ENCODE measurements at regions of chr12 and their contacts with region 1.

Region 1: DNA sequence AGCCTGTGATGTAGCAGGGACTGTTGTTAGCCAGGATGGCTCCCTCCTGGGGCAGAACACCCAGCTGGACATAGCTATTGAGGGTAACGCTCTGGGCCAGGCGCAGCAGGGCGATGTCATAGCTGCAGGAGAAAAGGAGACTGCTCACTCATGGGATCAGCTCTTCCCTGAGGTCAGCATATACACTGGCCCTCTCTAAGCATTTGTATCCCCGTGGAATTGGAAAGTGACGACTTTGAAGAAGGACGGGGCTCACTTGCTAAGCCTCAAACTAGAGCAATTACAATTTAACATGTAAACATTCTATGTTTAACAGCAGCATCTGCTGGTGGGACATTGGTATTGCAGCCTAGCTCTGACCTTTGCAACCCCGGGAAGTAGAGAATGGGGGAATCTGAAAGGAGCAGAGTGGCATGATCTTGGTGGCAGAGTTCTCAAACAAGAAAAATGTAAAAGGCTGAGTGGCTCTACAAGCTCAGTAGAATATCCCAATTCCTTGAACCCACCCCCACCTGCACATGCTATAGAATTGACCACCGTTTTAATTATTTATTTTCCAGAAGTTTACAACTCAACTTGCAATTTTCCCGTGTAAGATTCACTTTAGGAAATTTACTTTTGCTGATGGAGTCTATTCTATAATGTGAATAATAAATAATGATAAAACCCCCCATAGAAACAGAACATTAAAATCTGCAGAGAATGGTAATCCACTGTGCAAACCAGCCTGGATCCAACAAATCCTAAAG is 5.0 kb downstream of the CELA1 start:
- DNase-seq: peak; percentile 75
- ATAC-seq: peak; percentile 76
- H3K4me3 Mint-ChIP-seq: peak overlapping the region; percentile 51
- H3K27ac Mint-ChIP-seq: no peak overlapping the region
- H3K4me1 Mint-ChIP-seq: peaks cover 6% of the 10 kb centered on the region
- H3K27me3 Mint-ChIP-seq: no peaks in the 10 kb centered on the region
- CTCF ChIP-seq: peak; percentile 91

Region 2: DNA sequence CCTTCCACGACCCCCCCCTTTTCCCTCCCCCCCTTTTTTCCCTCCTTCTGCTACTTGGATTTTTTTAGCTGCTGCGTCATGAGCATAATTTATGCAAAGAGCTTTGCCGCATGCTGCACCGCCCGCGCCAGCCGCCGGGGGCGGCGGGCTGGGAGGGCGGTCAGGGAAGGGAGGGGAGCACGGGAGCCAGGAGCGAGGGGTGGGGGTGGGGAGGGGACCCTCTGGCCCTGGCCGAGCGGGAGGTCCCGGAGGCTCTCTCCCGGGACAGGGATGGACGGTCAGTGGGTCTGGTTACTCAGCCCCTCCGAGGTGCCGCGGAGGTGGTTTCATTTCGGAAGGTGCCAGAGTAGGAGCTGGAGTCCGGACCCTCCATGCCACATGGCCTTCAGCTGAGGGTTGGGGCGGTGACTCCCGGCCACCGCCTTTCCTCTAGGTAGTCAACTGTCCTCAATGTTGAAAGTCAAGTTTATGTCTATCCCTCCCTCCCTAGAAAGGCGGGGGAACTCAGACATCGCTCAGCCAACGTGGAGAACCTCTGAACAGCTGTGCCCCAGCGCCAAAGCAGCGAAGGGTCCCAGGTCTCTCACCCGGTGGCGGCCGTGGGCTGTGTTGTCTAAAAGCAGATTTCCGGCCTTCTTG is 123.3 kb before region 1 on chr12 and contains the start of gene POU6F1:
- CTCF ChIA-PET with region 1: interaction called, 20 read pairs
- POLR2A ChIA-PET with region 1: no interaction called
- DNase-seq: peak; percentile 74
- ATAC-seq: peak; percentile 75
- H3K4me3 Mint-ChIP-seq: peak within 1 kb of the TSS; percentile 70
- H3K27ac Mint-ChIP-seq: peak within 1 kb of the TSS; percentile 54
- H3K4me1 Mint-ChIP-seq: peaks cover 18% of the 10 kb centered on the region
- H3K27me3 Mint-ChIP-seq: no peaks in the 10 kb centered on the region
- CTCF ChIP-seq: peak; percentile 34; the same call in 1 of the 2 replicates
- total RNA-seq, gene POU6F1: 10.2 to 14.5 TPM (median 11.2 TPM) in 3 replicates

Region 3: DNA sequence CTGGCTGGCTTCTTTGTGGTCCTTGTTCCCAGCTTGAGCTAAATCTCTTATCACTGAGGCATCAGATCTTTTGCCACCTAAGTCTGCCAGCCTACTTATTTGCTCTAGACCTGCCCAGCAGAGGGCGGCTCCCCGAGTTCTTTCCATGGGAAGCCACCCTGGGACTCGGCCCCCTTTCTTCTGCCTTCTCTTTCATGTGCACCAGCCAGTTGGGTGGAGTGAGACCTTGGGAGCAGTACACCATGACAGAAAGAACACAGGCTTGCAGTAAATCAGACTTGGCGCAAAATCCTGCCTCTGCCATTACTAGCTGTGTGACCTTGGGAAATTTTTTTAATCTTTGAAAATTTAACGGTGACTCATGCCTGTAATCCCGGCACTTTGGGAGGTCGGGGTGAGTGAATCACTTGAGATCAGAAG is 78.7 kb before region 1 on chr12:
- CTCF ChIA-PET with region 1: interaction called, 17 read pairs
- POLR2A ChIA-PET with region 1: no interaction called
- DNase-seq: peak; percentile 63
- ATAC-seq: peak; percentile 96
- H3K4me3 Mint-ChIP-seq: no peak overlapping the region
- H3K27ac Mint-ChIP-seq: no peak overlapping the region; the same call in 1 of the 2 replicates
- H3K4me1 Mint-ChIP-seq: peaks cover 11% of the 10 kb centered on the region
- H3K27me3 Mint-ChIP-seq: no peaks in the 10 kb centered on the region
- CTCF ChIP-seq: no peak

Region 4: DNA sequence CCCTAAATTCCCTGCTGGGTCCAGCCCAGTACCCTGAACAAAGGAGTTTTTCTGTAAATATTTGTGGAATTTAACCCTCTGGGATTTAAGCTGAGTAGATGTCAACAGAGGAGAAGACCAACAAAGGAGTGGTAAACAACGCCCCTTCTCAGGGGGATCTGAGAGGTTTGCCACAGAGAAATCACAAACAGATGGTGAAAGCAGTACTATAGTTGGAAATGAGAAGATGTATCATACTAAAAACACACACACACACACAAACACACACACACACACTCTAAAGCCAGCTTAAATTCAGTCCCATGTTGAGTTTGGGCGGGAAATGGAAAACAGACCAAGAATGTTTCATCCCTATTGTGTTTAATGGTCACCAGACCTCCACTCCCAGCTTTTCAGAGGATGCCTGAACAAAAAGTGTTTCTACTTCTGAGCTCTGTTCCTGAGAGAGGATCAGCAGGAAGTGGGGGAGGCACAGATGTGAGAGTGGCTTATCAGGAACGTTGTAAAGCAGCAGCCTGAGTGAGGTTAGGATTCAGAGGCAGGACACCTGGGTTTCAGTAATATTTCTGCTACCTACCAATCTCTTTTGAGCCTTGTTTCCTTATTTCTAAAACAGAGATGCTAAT is 20.6 kb before region 1 on chr12:
- CTCF ChIA-PET with region 1: interaction called, 14 read pairs
- POLR2A ChIA-PET with region 1: no interaction called
- DNase-seq: no peak
- ATAC-seq: peak; percentile 86
- H3K4me3 Mint-ChIP-seq: no peak overlapping the region
- H3K27ac Mint-ChIP-seq: peak overlapping the region; percentile 93
- H3K4me1 Mint-ChIP-seq: peaks cover 31% of the 10 kb centered on the region
- H3K27me3 Mint-ChIP-seq: no peaks in the 10 kb centered on the region
- CTCF ChIP-seq: no peak

Region 5: DNA sequence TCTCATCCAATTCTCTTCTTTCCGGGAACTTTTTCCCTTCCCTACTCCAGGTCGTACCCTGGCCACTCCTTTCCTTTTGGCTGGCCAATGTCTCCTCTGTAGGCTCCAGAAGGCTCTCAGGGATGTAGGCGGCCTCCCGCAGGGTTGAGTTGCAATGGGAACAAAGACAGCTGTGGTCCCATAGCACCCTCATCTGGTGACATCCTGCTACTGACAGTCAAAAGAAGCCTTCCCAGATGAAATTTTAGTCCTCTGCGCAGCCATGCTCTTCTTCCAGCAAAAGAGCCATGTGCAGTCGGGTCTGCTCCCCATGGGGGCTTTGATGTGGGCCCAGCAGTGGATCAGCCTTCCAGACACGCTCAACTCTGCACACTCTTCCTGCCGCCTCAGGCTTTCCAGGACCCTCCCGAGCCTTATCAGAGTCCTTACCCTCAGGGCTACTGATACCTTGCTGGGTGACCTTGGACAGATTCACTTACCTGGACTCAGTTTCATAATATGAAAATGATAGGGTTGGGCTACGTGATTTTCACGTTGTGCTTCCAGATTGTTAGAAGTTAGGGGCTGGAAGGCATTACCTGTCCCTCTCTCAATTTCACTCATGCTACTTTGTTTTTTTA is 10.6 kb after region 1 on chr12:
- CTCF ChIA-PET with region 1: interaction called, 39 read pairs
- POLR2A ChIA-PET with region 1: interaction called, 4 read pairs
- DNase-seq: peak; percentile 84
- ATAC-seq: peak; percentile 97
- H3K4me3 Mint-ChIP-seq: no peak overlapping the region
- H3K27ac Mint-ChIP-seq: no peak overlapping the region
- H3K4me1 Mint-ChIP-seq: peaks cover 10% of the 10 kb centered on the region
- H3K27me3 Mint-ChIP-seq: no peaks in the 10 kb centered on the region; the same call in 1 of the 2 replicates
- CTCF ChIP-seq: peak; percentile 74

Region 6: GRCh38 chr12:51647647-51648046 is 306.2 kb after region 1 on chr12:
- CTCF ChIA-PET with region 1: no interaction called
- POLR2A ChIA-PET with region 1: no interaction called
- DNase-seq: no peak
- ATAC-seq: no peak
- H3K4me3 Mint-ChIP-seq: no peak overlapping the region
- H3K27ac Mint-ChIP-seq: no peak overlapping the region
- H3K4me1 Mint-ChIP-seq: no peaks in the 10 kb centered on the region
- H3K27me3 Mint-ChIP-seq: peaks cover 2% of the 10 kb centered on the region; the same call in 1 of the 2 replicates
- CTCF ChIP-seq: no peak

Region 7: DNA sequence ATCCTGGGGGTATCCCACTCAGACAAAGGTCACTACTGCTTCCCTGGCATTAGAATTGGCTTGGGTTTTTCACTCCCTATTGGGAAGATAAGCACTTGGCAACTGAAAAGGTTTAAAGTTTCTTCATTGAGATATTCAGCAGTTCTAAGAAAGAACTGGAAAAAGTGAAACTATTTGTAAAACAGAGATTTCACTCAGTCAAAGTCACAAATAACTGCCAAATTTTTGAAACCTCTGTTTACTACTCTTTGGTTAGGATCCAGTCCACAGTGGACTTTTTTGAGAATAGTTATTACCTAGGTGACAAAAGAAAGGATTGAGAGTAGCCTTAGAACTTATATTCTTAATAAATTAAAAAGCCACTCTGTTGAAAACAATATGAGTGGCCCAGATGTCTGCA is 422.3 kb after region 1 on chr12:
- CTCF ChIA-PET with region 1: no interaction called
- POLR2A ChIA-PET with region 1: no interaction called
- DNase-seq: no peak
- ATAC-seq: no peak
- H3K4me3 Mint-ChIP-seq: no peak overlapping the region
- H3K27ac Mint-ChIP-seq: no peak overlapping the region
- H3K4me1 Mint-ChIP-seq: no peaks in the 10 kb centered on the region
- H3K27me3 Mint-ChIP-seq: no peaks in the 10 kb centered on the region
- CTCF ChIP-seq: no peak